Right lobe of liver (tissue), 6 donors: ENCODE measurements at regions of chr1 and their contacts with region 1.

Region 1: GRCh38 chr1:2642560-2643413 is 10.0 kb upstream of the MMEL1 start:
- DNase-seq: peak; percentile 89 to 92 (median 91)
- ATAC-seq: peak; percentile 81 to 96 (median 92)
- H3K4me3 ChIP-seq: peak overlapping the region; percentile 83 to 96 (median 93)
- H3K27ac ChIP-seq: peak overlapping the region; percentile 72 to 86 (median 78)
- H3K4me1 ChIP-seq: peaks cover 0 to 7% (median 0%) of the 10 kb centered on the region in 4 donors
- H3K27me3 ChIP-seq: no peaks in the 10 kb centered on the region
- CTCF ChIP-seq: no peak
- POLR2A ChIP-seq: peak; percentile 72

Region 2: DNA sequence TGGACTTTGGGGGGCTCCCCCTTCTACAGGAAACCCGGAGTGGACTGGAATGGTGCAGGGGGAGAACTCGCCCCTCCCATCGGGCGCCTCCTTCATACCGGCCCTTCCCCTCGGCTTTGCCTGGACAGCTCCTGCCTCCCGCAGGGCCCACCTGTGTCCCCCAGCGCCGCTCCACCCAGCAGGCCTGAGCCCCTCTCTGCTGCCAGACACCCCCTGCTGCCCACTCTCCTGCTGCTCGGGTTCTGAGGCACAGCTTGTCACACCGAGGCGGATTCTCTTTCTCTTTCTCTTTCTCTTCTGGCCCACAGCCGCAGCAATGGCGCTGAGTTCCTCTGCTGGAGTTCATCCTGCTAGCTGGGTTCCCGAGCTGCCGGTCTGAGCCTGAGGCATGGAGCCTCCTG is 86.5 kb before region 1 on chr1 and contains the start of gene TNFRSF14:
- intact Hi-C with region 1: loop called (anchors 10 kb)
- DNase-seq: peak; percentile 63 to 77 (median 70)
- ATAC-seq: peak; percentile 44 to 60 (median 56)
- H3K4me3 ChIP-seq: peak within 1 kb of the TSS; percentile 62 to 70 (median 63)
- H3K27ac ChIP-seq: peak within 1 kb of the TSS; percentile 93 to 96 (median 93)
- H3K4me1 ChIP-seq: peaks cover 0 to 12% (median 0%) of the 10 kb centered on the region in 4 donors
- H3K27me3 ChIP-seq: no peaks in the 10 kb centered on the region
- CTCF ChIP-seq: no peak
- POLR2A ChIP-seq: no peak
- total RNA-seq, gene TNFRSF14: 31.0 to 54.8 (median 41.1) TPM

Region 3: GRCh38 chr1:2561898-2562545 is 80.8 kb before region 1 on chr1:
- intact Hi-C with region 1: loop called (anchors 10 kb)
- DNase-seq: peak in 1 of 3 donors; percentile 27
- ATAC-seq: peak; percentile 14 to 39 (median 22)
- H3K4me3 ChIP-seq: no peak overlapping the region
- H3K27ac ChIP-seq: no peak overlapping the region
- H3K4me1 ChIP-seq: peaks cover 0 to 7% (median 0%) of the 10 kb centered on the region in 4 donors
- H3K27me3 ChIP-seq: no peaks in the 10 kb centered on the region
- CTCF ChIP-seq: peak; percentile 29 to 54 (median 44)
- POLR2A ChIP-seq: no peak

Region 4: DNA sequence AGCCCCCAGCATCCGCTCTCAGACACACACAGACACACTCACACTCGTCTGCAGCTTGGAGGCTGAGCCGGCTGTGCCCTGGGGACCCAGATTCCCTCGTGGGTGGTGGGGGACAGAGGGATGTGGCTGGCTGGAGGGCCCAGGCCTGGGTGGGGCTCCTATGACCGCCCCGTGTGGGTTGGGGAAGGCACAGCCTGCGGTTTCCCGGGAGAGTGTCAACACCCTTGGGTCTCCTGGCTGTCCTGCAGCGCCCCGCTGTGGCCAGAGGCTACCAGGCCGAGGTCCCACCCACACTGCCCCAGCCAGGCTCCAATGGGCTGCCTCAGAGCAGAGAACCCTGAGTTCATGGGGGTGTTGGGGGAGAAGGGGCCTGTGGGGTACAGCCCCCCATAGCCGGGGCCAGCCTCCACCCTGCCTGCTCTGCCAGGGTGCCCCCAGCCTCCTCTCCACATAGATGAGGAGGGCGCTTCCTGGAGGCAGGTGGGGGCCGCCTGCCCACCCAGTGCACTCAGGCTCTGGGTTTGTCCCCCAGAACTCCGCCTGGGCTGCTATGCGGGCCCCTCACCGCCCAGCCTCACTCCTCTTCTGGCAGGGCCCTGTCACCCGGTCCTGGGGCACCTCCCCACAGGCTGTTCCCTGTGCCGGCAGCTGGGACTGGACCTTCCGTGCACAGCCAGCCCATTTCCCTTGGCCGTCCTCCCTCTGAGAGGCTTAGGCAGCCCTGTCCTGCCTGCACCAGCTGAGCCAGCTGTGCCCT is 158.9 kb after region 1 on chr1 and contains the start of gene TTC34:
- intact Hi-C with region 1: no loop called
- DNase-seq: peak in 2 of 3 donors; percentile 27 to 52
- ATAC-seq: peak; percentile 13 to 42 (median 40)
- H3K4me3 ChIP-seq: no peak within 1 kb of the TSS
- H3K27ac ChIP-seq: no peak within 1 kb of the TSS
- H3K4me1 ChIP-seq: no peaks in the 10 kb centered on the region
- H3K27me3 ChIP-seq: no peaks in the 10 kb centered on the region
- CTCF ChIP-seq: peak in 3 of 4 donors; percentile 11 to 19 (median 18)
- POLR2A ChIP-seq: no peak
- total RNA-seq, gene TTC34: 0.06 to 0.23 (median 0.18) TPM in 5 of 6 experiments, not detected in the other